Caco-2 (cell line): ENCODE measurements at regions of chr17 and their contacts with region 1.

Region 1: GRCh38 chr17:66255112-66255511 is 25.9 kb upstream of the APOH start:
- DNase-seq: peak; percentile 47 to 66
- H3K4me3 ChIP-seq: no peak overlapping the region
- H3K4me3 Mint-ChIP-seq: no peak overlapping the region
- H3K27ac Mint-ChIP-seq: no peak overlapping the region
- H3K4me1 ChIP-seq: peaks cover 17% of the 10 kb centered on the region
- H3K4me1 Mint-ChIP-seq: peaks cover 15% of the 10 kb centered on the region
- H3K27me3 ChIP-seq: no peaks in the 10 kb centered on the region
- H3K27me3 Mint-ChIP-seq: no peaks in the 10 kb centered on the region
- CTCF ChIP-seq: peak; percentile 74

Region 2: GRCh38 chr17:66200685-66201092 is 54.4 kb before region 1 on chr17:
- CTCF ChIA-PET with region 1: no interaction called
- POLR2A ChIA-PET with region 1: no interaction called
- intact Hi-C with region 1: loop called (anchors 5 kb)
- DNase-seq: peak; percentile 77 to 79
- H3K4me3 ChIP-seq: no peak overlapping the region
- H3K4me3 Mint-ChIP-seq: no peak overlapping the region
- H3K27ac Mint-ChIP-seq: peak overlapping the region; percentile 27
- H3K4me1 ChIP-seq: peaks cover 5% of the 10 kb centered on the region
- H3K4me1 Mint-ChIP-seq: peaks cover 7% of the 10 kb centered on the region
- H3K27me3 ChIP-seq: no peaks in the 10 kb centered on the region
- H3K27me3 Mint-ChIP-seq: no peaks in the 10 kb centered on the region
- CTCF ChIP-seq: peak; percentile 80 to 83

Region 3: DNA sequence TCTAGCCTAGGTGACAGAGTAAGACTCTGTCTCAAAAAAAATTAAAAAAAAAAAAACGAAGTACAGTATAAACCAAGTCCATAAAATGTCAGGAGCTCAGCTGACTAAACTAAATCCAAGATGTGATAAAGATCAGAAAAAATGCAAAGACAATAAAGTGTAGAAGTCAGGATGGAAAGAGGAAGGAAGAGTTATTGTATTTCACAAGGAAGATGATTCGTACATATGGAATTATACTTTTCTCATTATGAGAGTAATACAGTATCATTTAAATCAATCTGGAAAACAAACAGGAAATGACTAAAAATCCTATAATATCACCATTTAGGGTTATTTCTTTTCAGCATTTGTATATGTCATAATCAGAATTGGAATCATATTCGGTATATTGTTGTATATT is 14.5 kb before region 1 on chr17:
- CTCF ChIA-PET with region 1: no interaction called
- POLR2A ChIA-PET with region 1: no interaction called
- intact Hi-C with region 1: no loop called
- DNase-seq: no peak
- H3K4me3 ChIP-seq: no peak overlapping the region
- H3K4me3 Mint-ChIP-seq: no peak overlapping the region
- H3K27ac Mint-ChIP-seq: no peak overlapping the region
- H3K4me1 ChIP-seq: peaks cover 6% of the 10 kb centered on the region; the same call in 1 of the 2 replicates
- H3K4me1 Mint-ChIP-seq: peaks cover 7% of the 10 kb centered on the region
- H3K27me3 ChIP-seq: no peaks in the 10 kb centered on the region
- H3K27me3 Mint-ChIP-seq: no peaks in the 10 kb centered on the region
- CTCF ChIP-seq: no peak

Region 4: GRCh38 chr17:66301797-66302741 is 47.0 kb after region 1 on chr17 and contains the start of gene PRKCA:
- CTCF ChIA-PET with region 1: no interaction called
- POLR2A ChIA-PET with region 1: no interaction called
- intact Hi-C with region 1: loop called (anchors 5 kb)
- DNase-seq: peak; percentile 65 to 85
- H3K4me3 ChIP-seq: peak within 1 kb of the TSS; percentile 89
- H3K4me3 Mint-ChIP-seq: peak within 1 kb of the TSS; percentile 92
- H3K27ac Mint-ChIP-seq: peak within 1 kb of the TSS; percentile 82
- H3K4me1 ChIP-seq: no peaks in the 10 kb centered on the region; the same call in 1 of the 2 replicates
- H3K4me1 Mint-ChIP-seq: peaks cover 12% of the 10 kb centered on the region
- H3K27me3 ChIP-seq: no peaks in the 10 kb centered on the region
- H3K27me3 Mint-ChIP-seq: no peaks in the 10 kb centered on the region
- CTCF ChIP-seq: no peak
- total RNA-seq, gene PRKCA: 29.6 and 34.7 TPM in 2 replicates

Region 5: GRCh38 chr17:66426397-66427033 is 171.4 kb after region 1 on chr17:
- CTCF ChIA-PET with region 1: no interaction called
- POLR2A ChIA-PET with region 1: no interaction called
- intact Hi-C with region 1: loop called (anchors 1 kb)
- DNase-seq: peak; percentile 47 to 64
- H3K4me3 ChIP-seq: no peak overlapping the region
- H3K4me3 Mint-ChIP-seq: no peak overlapping the region
- H3K27ac Mint-ChIP-seq: peak overlapping the region; percentile 5
- H3K4me1 ChIP-seq: peaks cover 21% of the 10 kb centered on the region
- H3K4me1 Mint-ChIP-seq: peaks cover 15% of the 10 kb centered on the region
- H3K27me3 ChIP-seq: no peaks in the 10 kb centered on the region
- H3K27me3 Mint-ChIP-seq: no peaks in the 10 kb centered on the region
- CTCF ChIP-seq: peak; percentile 34 to 39

Region 6: GRCh38 chr17:66625311-66625775 is 370.2 kb after region 1 on chr17:
- CTCF ChIA-PET with region 1: no interaction called
- POLR2A ChIA-PET with region 1: no interaction called
- intact Hi-C with region 1: loop called (anchors 1 kb)
- DNase-seq: no peak
- H3K4me3 ChIP-seq: no peak overlapping the region
- H3K4me3 Mint-ChIP-seq: no peak overlapping the region
- H3K27ac Mint-ChIP-seq: no peak overlapping the region
- H3K4me1 ChIP-seq: peaks cover 12% of the 10 kb centered on the region; the same call in 1 of the 2 replicates
- H3K4me1 Mint-ChIP-seq: peaks cover 16% of the 10 kb centered on the region
- H3K27me3 ChIP-seq: no peaks in the 10 kb centered on the region
- H3K27me3 Mint-ChIP-seq: no peaks in the 10 kb centered on the region
- CTCF ChIP-seq: peak; percentile 53 to 54

Region 7: DNA sequence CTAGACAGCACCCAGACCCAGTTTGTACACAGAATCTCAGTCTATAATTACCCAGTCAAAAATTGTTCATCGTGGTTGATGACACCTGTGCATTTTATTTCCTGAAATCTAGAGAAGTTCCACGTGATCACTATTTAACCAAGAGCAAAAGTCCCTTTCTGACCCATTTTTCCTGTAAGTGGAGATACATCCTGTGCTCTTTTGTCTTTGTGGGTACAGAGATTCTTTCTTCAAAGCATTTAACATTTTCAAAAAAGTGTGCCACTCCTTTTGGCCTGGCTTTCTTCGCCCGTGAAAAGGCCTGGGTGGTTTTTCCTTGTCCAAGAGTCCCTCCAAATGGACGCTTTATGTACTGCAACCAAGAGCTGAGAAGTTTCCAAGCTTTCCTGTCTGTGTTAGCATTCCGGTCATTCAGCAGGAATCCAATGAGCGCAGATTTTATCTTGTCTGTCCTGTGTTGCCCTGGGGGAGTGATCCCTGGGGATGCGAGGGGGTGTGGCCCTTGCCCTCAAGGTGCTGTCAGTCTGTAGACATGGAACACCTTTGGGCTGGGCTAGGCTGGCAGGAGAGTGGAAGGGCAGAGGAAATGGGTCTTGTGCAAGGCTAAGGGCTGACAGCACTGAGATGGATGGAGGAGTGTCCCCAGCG is 418.7 kb after region 1 on chr17:
- CTCF ChIA-PET with region 1: interaction called, 16 read pairs
- POLR2A ChIA-PET with region 1: no interaction called
- intact Hi-C with region 1: loop called (anchors 1 kb)
- DNase-seq: peak; percentile 54 to 72
- H3K4me3 ChIP-seq: no peak overlapping the region
- H3K4me3 Mint-ChIP-seq: no peak overlapping the region
- H3K27ac Mint-ChIP-seq: peak overlapping the region; percentile 14
- H3K4me1 ChIP-seq: peaks cover 13% of the 10 kb centered on the region
- H3K4me1 Mint-ChIP-seq: peaks cover 19% of the 10 kb centered on the region
- H3K27me3 ChIP-seq: no peaks in the 10 kb centered on the region
- H3K27me3 Mint-ChIP-seq: no peaks in the 10 kb centered on the region
- CTCF ChIP-seq: peak; percentile 66 to 81